ENCODE measurements at regions of chr11 and their contacts with region 1.

Region 1: DNA sequence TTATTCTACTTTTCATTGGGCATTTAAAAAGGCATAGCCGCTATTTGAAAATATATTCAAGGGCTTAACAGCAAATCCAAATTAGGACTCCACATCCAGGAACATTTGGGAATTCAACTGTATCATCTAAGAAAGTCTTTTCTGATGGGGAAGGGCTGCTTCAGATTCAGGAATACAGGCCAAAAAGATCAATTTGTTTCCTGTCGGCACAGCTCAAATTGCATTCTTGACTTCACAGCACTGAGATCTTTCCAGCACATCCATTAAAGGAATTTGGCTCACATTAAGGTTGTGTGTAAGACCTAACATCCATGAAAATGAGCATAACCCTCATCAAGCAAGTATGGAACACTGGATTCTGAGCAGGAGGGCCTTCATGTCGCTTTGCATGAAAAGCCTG is 1169.5 kb upstream of the CCDC90B start:
- DNase-seq: no peak
- ATAC-seq: no peak
- H3K4me3 ChIP-seq: no peak overlapping the region
- H3K27ac ChIP-seq: no peak overlapping the region
- H3K4me1 ChIP-seq: no peaks in the 10 kb centered on the region
- H3K27me3 ChIP-seq: no peaks in the 10 kb centered on the region
- CTCF ChIP-seq: no peak
- POLR2A ChIP-seq: no peak
- RAD21 ChIP-seq: no peak

Region 2: GRCh38 chr11:84398017-84398626 is 57.6 kb before region 1 on chr11:
- CTCF ChIA-PET with region 1: no interaction called
- POLR2A ChIA-PET with region 1: no interaction called
- dilution Hi-C with region 1: no loop called
- in situ Hi-C with region 1: no loop called
- intact Hi-C with region 1: loop called (anchors 10 kb)
- DNase-seq: peak; percentile 1
- ATAC-seq: no peak
- H3K4me3 ChIP-seq: no peak overlapping the region
- H3K27ac ChIP-seq: no peak overlapping the region
- H3K4me1 ChIP-seq: no peaks in the 10 kb centered on the region
- H3K27me3 ChIP-seq: no peaks in the 10 kb centered on the region
- CTCF ChIP-seq: peak; percentile 17; the same call in 1 of the 2 replicates
- POLR2A ChIP-seq: no peak
- RAD21 ChIP-seq: no peak

Region 3: GRCh38 chr11:84430661-84431060 is 25.0 kb before region 1 on chr11:
- CTCF ChIA-PET with region 1: no interaction called
- POLR2A ChIA-PET with region 1: no interaction called
- dilution Hi-C with region 1: no loop called
- in situ Hi-C with region 1: no loop called
- intact Hi-C with region 1: no loop called
- DNase-seq: no peak
- ATAC-seq: no peak
- H3K4me3 ChIP-seq: no peak overlapping the region
- H3K27ac ChIP-seq: no peak overlapping the region
- H3K4me1 ChIP-seq: no peaks in the 10 kb centered on the region
- H3K27me3 ChIP-seq: no peaks in the 10 kb centered on the region
- CTCF ChIP-seq: no peak
- POLR2A ChIP-seq: no peak
- RAD21 ChIP-seq: no peak